ENCODE measurements at regions of chr17 and their contacts with region 1.

Region 1: DNA sequence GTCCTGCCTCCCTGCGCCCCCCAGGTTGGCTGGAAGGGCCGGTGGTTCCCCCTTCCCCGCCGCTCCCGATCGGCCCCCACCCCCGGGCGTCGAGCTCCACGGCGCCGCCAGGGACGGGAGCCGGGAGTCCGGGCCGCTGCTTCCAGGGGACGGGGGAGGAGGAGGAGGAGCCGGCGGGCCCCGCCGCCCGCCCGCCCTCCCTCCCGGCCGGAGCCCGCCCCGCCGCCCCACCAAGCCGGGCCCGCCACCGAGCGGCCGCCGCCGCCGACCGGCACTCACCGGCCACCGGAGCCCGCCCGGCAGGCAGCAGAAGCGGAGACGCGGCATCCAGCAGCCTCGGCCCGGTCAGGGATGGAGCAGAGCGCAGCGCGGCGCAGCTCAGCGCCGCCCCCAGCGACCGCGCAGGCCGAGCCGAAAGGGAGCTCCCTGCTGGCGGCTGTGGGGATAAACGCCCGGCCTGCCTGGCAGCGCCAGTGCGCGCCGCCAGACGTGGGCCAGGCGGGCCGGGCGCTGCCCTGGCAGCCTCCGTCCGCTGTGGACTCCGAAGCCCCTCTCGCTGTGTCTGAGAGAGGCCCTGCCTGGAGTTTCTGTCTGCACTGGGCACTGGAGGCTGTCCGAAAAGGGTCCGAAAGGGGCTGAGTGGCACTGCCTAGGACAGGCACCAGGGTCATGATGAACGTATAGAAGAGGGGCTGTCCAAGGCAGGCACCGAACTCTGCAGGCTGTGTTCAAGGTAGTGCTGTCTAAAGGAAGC is at the start of gene MYO18A:
- DNase-seq: peak; percentile 64 to 89 (median 78)
- ATAC-seq: peak; percentile 94
- H3K4me3 ChIP-seq: peak within 1 kb of the TSS; percentile 20 to 26
- H3K4me3 Mint-ChIP-seq: peak within 1 kb of the TSS; percentile 68
- H3K27ac ChIP-seq: peak within 1 kb of the TSS in 1 of 2 experiments; percentile 5
- H3K27ac Mint-ChIP-seq: no peak within 1 kb of the TSS
- H3K4me1 ChIP-seq: peaks cover 22% of the 10 kb centered on the region
- H3K4me1 Mint-ChIP-seq: peaks cover 20% of the 10 kb centered on the region
- H3K27me3 ChIP-seq: no peaks in the 10 kb centered on the region
- H3K27me3 Mint-ChIP-seq: no peaks in the 10 kb centered on the region
- CTCF ChIP-seq: peak; percentile 86
- total RNA-seq, gene MYO18A: 48.5 to 52.9 TPM

Region 2: DNA sequence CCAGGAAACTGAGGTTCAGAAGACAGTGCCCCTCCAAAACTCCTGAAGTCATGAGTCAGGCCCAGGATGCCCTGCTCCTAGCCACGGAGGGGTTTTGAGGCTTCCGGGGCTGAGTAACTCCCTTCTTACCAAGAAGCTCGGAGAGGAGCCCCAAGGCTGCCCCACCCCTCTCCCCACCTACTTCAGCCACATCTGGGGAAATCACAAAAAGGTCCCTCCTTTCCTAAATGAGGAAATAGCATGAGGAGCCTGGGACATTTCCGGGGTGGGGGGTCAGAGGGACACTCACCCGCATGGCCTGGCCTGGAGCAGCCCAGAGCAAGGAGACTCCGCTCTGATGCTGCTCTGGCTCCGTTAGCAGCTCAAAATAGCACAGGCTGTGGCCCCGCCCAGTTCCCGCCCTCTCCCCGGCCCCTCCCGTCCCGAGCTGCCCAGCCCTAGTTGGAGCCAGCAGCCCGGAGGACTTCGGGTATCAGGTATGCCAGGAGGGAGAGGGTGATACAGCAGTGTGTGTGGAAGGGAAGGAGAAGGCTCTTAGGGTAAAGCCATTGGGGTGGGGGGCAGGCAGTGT is 40.1 kb before region 1 on chr17:
- CTCF ChIA-PET with region 1: interaction called, 276 read pairs
- POLR2A ChIA-PET with region 1: interaction called, 11 read pairs
- intact Hi-C with region 1: loop called in 1 of 2 experiments (anchors 1 kb)
- DNase-seq: peak; percentile 50 to 91 (median 85)
- ATAC-seq: peak; percentile 72
- H3K4me3 ChIP-seq: peak overlapping the region; percentile 69 to 73
- H3K4me3 Mint-ChIP-seq: peak overlapping the region; percentile 93
- H3K27ac ChIP-seq: peak overlapping the region; percentile 54 to 84
- H3K27ac Mint-ChIP-seq: peak overlapping the region; percentile 100
- H3K4me1 ChIP-seq: peaks cover 50% of the 10 kb centered on the region
- H3K4me1 Mint-ChIP-seq: peaks cover 68% of the 10 kb centered on the region
- H3K27me3 ChIP-seq: no peaks in the 10 kb centered on the region
- H3K27me3 Mint-ChIP-seq: no peaks in the 10 kb centered on the region
- CTCF ChIP-seq: no peak

Region 3: DNA sequence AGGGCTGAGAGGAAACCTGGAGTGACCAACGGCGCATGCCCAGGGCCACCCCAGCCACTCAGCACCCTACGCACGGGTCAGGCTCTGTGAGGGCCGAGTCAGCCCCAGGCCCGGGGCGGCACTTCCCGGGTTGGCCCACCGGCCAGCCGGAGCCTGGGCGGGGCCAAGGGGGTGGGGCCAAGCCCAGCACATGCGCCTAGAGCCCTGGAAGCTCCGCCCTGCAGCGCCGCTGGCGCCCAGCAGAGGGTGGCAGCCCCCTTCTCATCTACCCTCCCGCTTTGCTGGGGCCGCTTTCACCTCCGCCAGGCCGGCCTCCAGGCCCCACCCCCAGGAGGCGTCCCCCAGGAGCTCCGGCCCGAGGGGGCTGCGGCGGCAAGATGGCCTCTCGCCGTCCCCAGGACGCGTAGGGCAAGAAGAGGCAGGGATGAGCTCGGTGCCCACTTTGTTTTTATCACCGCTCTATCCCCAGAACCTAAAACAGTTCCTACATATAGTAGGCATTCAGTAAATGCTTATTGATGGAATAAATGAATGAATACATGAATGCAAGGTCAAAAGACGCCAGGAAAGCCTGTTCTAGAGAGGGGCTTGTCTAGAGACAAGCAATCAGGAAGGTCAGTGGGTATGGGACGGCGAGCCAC is 31.3 kb before region 1 on chr17:
- CTCF ChIA-PET with region 1: interaction called, 276 read pairs
- POLR2A ChIA-PET with region 1: interaction called, 17 read pairs
- intact Hi-C with region 1: loop called (anchors 1 kb)
- DNase-seq: peak; percentile 82 to 95 (median 91)
- ATAC-seq: peak; percentile 97
- H3K4me3 ChIP-seq: peak overlapping the region; percentile 54 to 56
- H3K4me3 Mint-ChIP-seq: peak overlapping the region; percentile 76
- H3K27ac ChIP-seq: peak overlapping the region in 1 of 2 experiments; percentile 88
- H3K27ac Mint-ChIP-seq: peak overlapping the region; percentile 87
- H3K4me1 ChIP-seq: peaks cover 23% of the 10 kb centered on the region
- H3K4me1 Mint-ChIP-seq: peaks cover 33% of the 10 kb centered on the region
- H3K27me3 ChIP-seq: no peaks in the 10 kb centered on the region
- H3K27me3 Mint-ChIP-seq: no peaks in the 10 kb centered on the region
- CTCF ChIP-seq: peak; percentile 98

Region 4: DNA sequence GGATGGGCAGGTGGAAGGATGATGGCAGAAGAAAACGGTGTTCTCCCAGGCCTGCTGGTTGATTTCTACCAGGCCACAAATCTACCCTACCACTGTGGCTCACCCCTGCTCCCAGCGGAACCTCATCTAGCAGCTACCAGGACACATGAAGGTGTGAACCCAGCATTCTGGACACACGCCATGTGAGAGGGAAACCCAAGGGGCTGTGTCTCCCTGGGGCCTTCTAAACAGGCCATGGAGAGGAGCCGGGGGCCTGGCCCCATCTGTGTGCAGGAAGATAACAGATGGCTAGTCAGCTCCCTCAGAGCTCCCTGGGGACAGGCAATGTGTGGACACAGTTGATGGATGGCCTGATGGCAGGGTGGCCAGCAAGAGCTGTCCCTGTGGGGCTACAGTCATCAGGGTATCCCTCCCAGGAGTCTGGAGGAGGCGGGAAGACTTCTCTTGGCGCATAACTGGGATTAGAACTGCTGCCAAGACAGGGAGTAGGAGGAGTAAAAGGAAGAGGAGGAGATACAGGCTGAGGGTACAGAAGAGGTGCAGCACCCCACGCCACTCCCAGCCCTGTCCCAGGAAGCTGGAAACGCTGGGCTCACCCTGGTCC is 17.4 kb before region 1 on chr17:
- CTCF ChIA-PET with region 1: interaction called, 276 read pairs
- POLR2A ChIA-PET with region 1: no interaction called
- intact Hi-C with region 1: no loop called
- DNase-seq: no peak
- ATAC-seq: no peak
- H3K4me3 ChIP-seq: no peak overlapping the region
- H3K4me3 Mint-ChIP-seq: no peak overlapping the region
- H3K27ac ChIP-seq: no peak overlapping the region
- H3K27ac Mint-ChIP-seq: no peak overlapping the region
- H3K4me1 ChIP-seq: no peaks in the 10 kb centered on the region
- H3K4me1 Mint-ChIP-seq: peaks cover 10% of the 10 kb centered on the region
- H3K27me3 ChIP-seq: no peaks in the 10 kb centered on the region
- H3K27me3 Mint-ChIP-seq: no peaks in the 10 kb centered on the region
- CTCF ChIP-seq: no peak

Region 5: GRCh38 chr17:29195465-29196081 is 15.4 kb after region 1 on chr17:
- CTCF ChIA-PET with region 1: interaction called, 10 read pairs
- POLR2A ChIA-PET with region 1: no interaction called
- intact Hi-C with region 1: no loop called
- DNase-seq: peak in 1 of 9 experiments; percentile 21
- ATAC-seq: no peak
- H3K4me3 ChIP-seq: no peak overlapping the region
- H3K4me3 Mint-ChIP-seq: no peak overlapping the region
- H3K27ac ChIP-seq: no peak overlapping the region
- H3K27ac Mint-ChIP-seq: no peak overlapping the region
- H3K4me1 ChIP-seq: peaks cover 4% of the 10 kb centered on the region
- H3K4me1 Mint-ChIP-seq: peaks cover 4% of the 10 kb centered on the region
- H3K27me3 ChIP-seq: no peaks in the 10 kb centered on the region
- H3K27me3 Mint-ChIP-seq: peaks cover 12% of the 10 kb centered on the region
- CTCF ChIP-seq: no peak

Measured in CD8-positive, alpha-beta T cell (primary cell).